ENCODE measurements at regions of chr7 and their contacts with region 1.

Region 1: DNA sequence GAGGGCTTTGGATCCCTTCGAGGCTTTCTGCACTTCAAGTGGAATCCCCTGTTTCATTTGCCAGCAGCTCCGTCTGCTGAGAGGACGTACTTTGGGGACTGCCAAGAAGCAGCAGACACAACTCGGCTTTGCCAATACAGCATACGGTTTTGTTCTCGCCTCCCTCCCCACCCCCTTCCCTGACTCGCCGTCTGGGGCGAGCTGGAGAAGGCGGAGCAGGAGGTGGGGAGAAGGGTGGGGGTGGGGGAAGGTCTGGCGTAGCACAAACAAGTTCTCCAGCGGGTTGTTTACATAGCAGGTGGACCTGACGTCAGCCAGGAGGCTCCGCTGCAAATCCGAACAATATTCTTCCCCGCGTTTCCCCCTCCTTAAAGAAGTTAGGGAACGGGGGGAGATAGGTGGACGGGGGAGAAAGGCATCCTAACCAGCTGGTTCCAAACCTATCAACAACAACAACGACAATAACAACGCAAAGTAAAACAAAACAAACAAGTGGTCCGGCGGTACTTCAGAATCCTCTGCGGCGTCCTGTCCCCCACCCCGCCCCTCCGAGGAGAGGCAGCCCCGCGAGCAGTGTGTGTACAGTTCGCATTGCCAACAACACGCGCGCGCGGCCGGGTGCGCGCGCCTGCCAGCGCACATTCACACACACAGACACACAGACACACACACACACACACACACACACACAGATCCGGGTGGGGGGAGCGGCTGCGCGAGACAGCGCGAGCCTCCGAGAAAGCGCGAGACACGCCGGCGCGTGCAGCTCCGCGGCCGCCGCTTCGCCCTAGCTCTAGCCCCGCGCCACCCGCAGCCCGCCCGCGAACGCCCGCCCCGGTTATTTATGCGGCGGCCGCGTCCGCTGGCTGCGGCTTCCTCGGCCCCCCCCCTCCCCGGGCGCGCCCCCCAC is 167.0 kb upstream of the PPP1R3A start:
- DNase-seq: no peak
- ATAC-seq: peak; percentile 52
- H3K4me3 Mint-ChIP-seq: peak overlapping the region; percentile 89
- H3K27ac Mint-ChIP-seq: no peak overlapping the region
- H3K4me1 Mint-ChIP-seq: peaks cover 53% of the 10 kb centered on the region
- H3K27me3 Mint-ChIP-seq: peaks cover 61% of the 10 kb centered on the region
- CTCF ChIP-seq: no peak

Region 2: GRCh38 chr7:113873554-113874151 is 212.2 kb before region 1 on chr7:
- CTCF ChIA-PET with region 1: no interaction called
- POLR2A ChIA-PET with region 1: no interaction called
- intact Hi-C with region 1: no loop called
- DNase-seq: no peak
- ATAC-seq: no peak
- H3K4me3 Mint-ChIP-seq: no peak overlapping the region
- H3K27ac Mint-ChIP-seq: no peak overlapping the region
- H3K4me1 Mint-ChIP-seq: no peaks in the 10 kb centered on the region
- H3K27me3 Mint-ChIP-seq: no peaks in the 10 kb centered on the region
- CTCF ChIP-seq: no peak

Region 3: DNA sequence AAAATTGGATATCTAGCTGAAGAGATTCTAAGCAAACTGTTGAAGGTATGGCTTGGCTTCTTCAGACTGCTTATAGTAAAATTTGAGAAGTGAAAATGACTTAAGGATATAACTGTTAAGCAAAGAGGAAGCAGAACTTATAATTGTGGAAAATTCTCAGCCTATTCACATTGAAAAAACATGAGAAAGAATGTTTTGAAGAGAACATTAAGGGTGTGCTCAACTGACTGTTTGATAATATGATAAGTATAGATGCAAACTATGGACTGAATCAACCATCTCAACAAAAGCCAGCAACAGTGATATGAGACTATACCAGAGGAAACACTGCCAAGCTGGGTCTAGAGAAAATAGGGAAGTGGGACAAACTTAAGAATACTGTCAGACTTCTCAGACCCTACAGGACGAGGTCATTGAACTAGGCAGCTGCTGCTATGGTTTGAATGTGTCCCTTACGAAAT is 33.9 kb before region 1 on chr7:
- CTCF ChIA-PET with region 1: no interaction called
- POLR2A ChIA-PET with region 1: no interaction called
- intact Hi-C with region 1: loop called (anchors 2 kb)
- DNase-seq: no peak
- ATAC-seq: peak; percentile 90
- H3K4me3 Mint-ChIP-seq: peak overlapping the region; percentile 33
- H3K27ac Mint-ChIP-seq: peak overlapping the region; percentile 32
- H3K4me1 Mint-ChIP-seq: peaks cover 41% of the 10 kb centered on the region
- H3K27me3 Mint-ChIP-seq: no peaks in the 10 kb centered on the region
- CTCF ChIP-seq: no peak

Region 4: DNA sequence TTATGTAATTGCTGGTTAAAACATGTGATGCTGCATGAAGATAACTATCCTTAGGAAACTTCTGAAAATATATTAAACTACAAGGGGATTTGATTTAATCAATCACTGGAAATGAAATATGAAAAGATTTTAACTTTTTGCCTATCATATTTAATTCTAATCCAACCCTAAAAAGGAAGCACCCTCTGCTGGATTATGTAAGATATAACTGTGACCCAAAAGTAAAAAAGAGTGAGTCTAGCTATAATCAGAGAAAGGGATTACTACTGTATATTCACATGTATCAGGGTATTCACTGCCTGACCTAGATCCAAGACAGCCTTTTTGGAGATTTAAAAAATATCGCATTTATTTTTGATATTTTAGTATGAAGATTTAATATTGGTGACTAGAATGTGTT is 1131.5 kb after region 1 on chr7:
- CTCF ChIA-PET with region 1: no interaction called
- POLR2A ChIA-PET with region 1: no interaction called
- intact Hi-C with region 1: loop called (anchors 2 kb)
- DNase-seq: no peak
- ATAC-seq: no peak
- H3K4me3 Mint-ChIP-seq: no peak overlapping the region
- H3K27ac Mint-ChIP-seq: no peak overlapping the region
- H3K4me1 Mint-ChIP-seq: no peaks in the 10 kb centered on the region
- H3K27me3 Mint-ChIP-seq: peaks cover 8% of the 10 kb centered on the region
- CTCF ChIP-seq: no peak

Region 5: GRCh38 chr7:115475761-115476385 is 1390.0 kb after region 1 on chr7:
- CTCF ChIA-PET with region 1: no interaction called
- POLR2A ChIA-PET with region 1: no interaction called
- intact Hi-C with region 1: loop called (anchors 2 kb)
- DNase-seq: no peak
- ATAC-seq: peak; percentile 31
- H3K4me3 Mint-ChIP-seq: no peak overlapping the region
- H3K27ac Mint-ChIP-seq: no peak overlapping the region
- H3K4me1 Mint-ChIP-seq: peaks cover 10% of the 10 kb centered on the region
- H3K27me3 Mint-ChIP-seq: peaks cover 25% of the 10 kb centered on the region
- CTCF ChIP-seq: no peak

Region 6: GRCh38 chr7:115851291-115851690 is 1765.4 kb after region 1 on chr7:
- CTCF ChIA-PET with region 1: interaction called, 7 read pairs
- POLR2A ChIA-PET with region 1: no interaction called
- intact Hi-C with region 1: loop called (anchors 1 kb)
- DNase-seq: no peak
- ATAC-seq: no peak
- H3K4me3 Mint-ChIP-seq: no peak overlapping the region
- H3K27ac Mint-ChIP-seq: no peak overlapping the region
- H3K4me1 Mint-ChIP-seq: no peaks in the 10 kb centered on the region
- H3K27me3 Mint-ChIP-seq: peaks cover 3% of the 10 kb centered on the region
- CTCF ChIP-seq: no peak

Measured in activated B cell treated with CpG ODN at 0.5 μM for 24 hours (primary cell).